Motor neuron (in vitro differentiated cells): ENCODE measurements at regions of chr12 and their contacts with region 1.

Region 1: GRCh38 chr12:6278439-6279255 is 31.8 kb upstream of the PLEKHG6 start:
- ATAC-seq: peak; percentile 85 to 99 (median 98)
- H3K4me3 ChIP-seq: peak overlapping the region; percentile 21 to 39 (median 35)
- H3K27ac ChIP-seq: no peak overlapping the region
- H3K4me1 ChIP-seq: peaks cover 2 to 16% of the 10 kb centered on the region in 2 donors

Region 2: GRCh38 chr12:5988659-5989116 is 290.0 kb before region 1 on chr12:
- in situ Hi-C with region 1: loop called in 3 of 9 experiments (anchors 25 kb)
- ATAC-seq: peak; percentile 97 to 100 (median 99)
- H3K4me3 ChIP-seq: no peak overlapping the region
- H3K27ac ChIP-seq: no peak overlapping the region
- H3K4me1 ChIP-seq: peaks cover 0 to 9% of the 10 kb centered on the region in 2 donors

Region 3: DNA sequence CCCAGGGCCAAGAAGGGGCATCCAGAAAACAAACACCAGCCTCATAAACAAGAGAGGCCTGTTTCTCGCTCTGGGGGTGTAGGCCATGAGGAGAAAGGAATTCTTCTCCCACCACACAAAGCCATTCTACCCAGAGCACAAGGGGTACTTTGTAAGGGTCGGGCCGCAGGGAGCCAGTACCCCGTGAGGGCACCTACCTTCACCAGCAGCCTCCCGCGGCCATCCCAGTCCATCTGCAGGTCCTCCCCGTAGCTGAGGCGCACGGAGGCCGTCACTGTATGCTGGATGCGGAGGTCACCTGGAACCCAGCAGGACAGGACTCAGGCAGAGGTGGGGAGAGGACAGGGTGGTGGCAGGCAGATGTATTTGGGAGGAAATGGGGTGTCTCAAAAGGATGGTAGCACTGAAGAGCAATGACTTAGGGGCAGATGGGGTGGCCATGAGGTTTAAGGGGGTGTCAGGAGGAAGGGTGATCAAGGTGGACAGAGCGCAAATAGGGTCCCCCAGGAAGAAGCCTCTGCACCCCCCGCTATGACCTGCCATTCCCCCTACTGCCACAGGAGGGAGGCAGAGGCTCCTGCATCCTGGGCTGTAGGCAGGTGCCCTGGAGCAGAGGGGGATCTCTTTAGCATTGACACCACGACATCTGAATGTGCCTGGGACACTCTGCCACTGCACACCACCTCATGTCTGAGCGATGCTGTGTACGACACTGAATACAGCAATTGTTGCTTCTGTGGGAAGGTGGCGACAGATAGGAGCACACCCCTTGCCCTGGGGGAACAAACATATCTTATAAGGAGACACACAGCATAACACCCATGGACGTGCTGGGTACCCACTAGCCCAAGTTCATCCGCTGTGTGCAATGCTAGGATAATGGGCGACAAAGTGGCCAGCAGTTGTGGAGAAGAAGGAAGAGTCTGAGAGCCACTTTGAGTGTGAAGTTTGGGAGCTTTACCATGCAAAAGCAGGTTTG is 215.6 kb before region 1 on chr12:
- in situ Hi-C with region 1: loop called in 8 of 9 experiments (anchors 10 to 25 kb)
- ATAC-seq: peak; percentile 53 to 96 (median 86)
- H3K4me3 ChIP-seq: no peak overlapping the region
- H3K27ac ChIP-seq: no peak overlapping the region
- H3K4me1 ChIP-seq: no peaks in the 10 kb centered on the region

Region 4: DNA sequence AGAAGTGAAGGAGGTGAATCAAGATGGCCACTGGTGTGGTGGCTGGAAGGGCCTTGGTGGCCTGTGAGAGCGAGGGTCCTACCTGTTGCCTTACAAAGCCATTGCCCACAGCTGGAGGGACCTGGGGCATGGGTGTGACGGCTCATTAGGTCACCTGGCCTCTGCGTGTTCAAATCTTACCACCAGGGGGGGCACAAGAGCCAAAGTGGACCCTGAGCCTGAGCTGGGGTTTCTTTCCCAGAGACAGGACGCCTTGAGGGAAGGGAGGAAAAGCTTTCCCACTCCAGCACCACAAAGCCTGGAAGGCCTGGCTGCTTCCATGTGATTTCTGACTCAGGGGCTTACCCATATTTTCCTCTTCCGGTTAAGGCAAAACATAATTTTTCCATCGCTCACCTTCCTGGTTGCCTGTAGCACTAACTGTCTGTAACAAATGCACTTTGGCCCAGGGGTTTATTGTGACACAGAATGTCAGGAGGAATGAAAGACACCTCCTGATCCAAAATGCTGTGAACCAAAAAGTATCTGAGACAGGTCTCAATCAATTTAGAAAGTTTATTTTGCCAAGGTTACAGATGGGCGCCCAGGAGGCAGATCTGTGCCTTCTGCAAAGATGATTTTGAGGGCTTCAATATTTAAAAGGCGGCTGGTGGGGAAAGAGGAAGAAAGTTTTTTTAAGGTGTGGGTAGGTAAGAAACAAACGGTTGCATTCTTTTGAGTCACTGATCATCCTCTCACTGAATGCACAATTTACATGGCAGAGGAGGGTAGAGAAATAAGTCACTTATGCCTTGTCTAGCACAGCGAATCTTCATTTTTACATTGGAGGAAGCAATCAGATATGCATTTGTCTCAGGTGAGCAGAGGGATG is 82.7 kb before region 1 on chr12:
- in situ Hi-C with region 1: loop called in 3 of 9 experiments (anchors 5 to 25 kb)
- ATAC-seq: peak; percentile 66 to 89 (median 74)
- H3K4me3 ChIP-seq: no peak overlapping the region
- H3K27ac ChIP-seq: no peak overlapping the region
- H3K4me1 ChIP-seq: peaks cover 8 to 32% of the 10 kb centered on the region in 2 donors